ENCODE measurements at regions of chr1 and their contacts with region 1.

Region 1: DNA sequence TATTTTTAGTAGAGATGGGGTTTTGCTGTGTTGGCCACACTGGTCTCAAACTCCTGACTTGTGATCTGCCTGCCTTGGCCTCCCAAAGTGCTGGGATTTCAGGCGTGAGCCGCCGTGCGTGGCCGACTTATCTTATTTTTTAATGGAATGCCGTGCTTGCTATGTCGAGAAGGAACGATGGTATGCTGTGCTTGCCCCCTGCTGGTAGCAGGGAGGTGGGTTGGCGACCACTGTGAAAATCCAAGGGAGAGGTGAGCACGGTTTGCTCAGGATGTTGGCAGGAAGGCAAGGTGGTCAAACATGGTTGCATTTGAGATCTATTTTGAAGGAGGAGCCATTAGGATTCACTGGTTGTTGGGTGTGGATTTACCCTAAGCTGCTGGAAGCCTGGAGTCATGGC is 45.8 kb upstream of the RCC2 start:
- DNase-seq: peak; percentile 38
- H3K4me3 Mint-ChIP-seq: no peak overlapping the region
- H3K27ac Mint-ChIP-seq: no peak overlapping the region
- H3K4me1 Mint-ChIP-seq: no peaks in the 10 kb centered on the region
- H3K27me3 Mint-ChIP-seq: no peaks in the 10 kb centered on the region
- CTCF ChIP-seq: peak; percentile 37

Region 2: GRCh38 chr1:17419626-17420328 is 65.5 kb before region 1 on chr1:
- CTCF ChIA-PET with region 1: interaction called, 4 read pairs
- POLR2A ChIA-PET with region 1: no interaction called
- intact Hi-C with region 1: loop called (anchors 5 kb)
- DNase-seq: peak; percentile 48
- H3K4me3 Mint-ChIP-seq: no peak overlapping the region
- H3K27ac Mint-ChIP-seq: no peak overlapping the region
- H3K4me1 Mint-ChIP-seq: no peaks in the 10 kb centered on the region
- H3K27me3 Mint-ChIP-seq: no peaks in the 10 kb centered on the region
- CTCF ChIP-seq: peak; percentile 99